Left ventricle myocardium inferior (tissue), 1 donor: ENCODE measurements at regions of chr4 and their contacts with region 1.

Region 1: DNA sequence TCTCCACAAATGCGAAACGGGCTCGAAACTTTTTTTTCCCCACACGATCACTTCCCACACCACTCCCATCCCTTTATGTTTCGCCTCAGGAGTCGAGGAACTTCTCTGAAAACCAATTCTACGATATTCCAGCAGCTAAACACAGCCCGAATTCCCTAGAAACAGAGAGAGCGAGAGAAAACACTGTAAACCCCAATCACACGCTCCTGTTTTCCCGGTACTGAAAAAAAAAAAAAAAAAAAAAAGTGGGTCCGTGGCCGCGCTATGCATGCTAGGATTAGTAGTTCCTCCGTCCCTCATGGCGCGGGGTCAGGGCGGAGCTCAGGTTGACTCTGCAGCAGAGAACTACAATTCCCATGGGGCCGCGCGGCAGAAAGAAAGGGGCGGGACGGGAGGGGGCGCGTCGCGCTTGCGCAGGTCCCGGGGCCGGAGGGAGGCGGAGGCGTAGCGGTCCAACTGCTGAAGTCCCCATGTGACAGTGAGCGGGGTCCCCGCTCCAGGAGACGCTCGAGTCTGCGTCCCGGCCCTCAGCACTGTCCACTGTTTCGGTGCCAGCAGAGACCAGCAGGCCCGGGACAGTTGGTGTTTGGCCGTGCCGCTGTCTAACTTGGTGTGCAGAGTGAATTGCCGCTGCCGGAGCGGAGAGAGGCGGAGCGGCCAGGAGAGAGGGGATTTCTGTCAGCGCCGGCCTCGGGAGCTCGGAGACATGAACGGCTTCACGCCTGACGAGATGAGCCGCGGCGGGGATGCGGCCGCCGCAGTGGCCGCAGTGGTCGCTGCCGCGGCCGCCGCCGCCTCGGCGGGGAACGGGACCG is at the start of gene SAP30:
- DNase-seq: peak; percentile 99
- H3K4me3 ChIP-seq: peak within 1 kb of the TSS; percentile 90
- H3K27ac ChIP-seq: peak within 1 kb of the TSS; percentile 98
- H3K4me1 ChIP-seq: peaks cover 82% of the 10 kb centered on the region
- H3K27me3 ChIP-seq: no peaks in the 10 kb centered on the region
- CTCF ChIP-seq: no peak
- total RNA-seq, gene SAP30: 16.5 TPM

Region 2: DNA sequence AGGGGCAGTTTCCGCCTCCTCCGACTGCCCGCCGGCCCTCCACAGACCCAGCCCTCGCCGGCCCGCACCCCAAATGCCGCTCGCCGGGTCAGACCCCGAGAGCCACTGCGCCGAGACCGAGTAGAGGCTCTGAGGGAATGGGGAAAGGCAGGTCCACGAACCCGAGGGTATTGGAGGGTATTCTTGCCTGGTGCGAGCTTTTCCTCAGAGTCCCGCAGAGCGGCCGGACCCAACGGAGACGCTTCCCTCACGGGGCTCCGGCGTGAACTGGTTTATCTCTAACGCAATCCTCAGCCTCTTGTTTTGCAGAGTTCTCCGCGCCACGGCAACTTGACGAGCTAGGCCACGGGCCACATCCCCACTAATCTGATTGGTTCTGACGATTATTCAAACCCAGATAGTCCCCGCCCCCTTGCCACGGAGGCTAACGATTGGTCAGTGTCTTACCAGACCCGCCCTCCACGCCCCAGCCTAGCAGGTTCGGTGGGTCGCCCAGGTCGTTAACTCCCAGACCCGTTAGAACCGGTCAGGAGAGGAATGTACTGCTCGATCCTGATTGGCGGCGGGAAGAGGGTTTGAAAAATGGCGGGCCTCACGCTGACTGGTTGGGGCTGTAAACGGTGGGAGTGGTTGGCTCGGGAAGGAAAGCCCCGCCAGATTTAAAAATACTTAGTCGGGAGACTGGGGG is 36.5 kb before region 1 on chr4 and contains the start of gene HMGB2:
- intact Hi-C with region 1: loop called (anchors 5 kb)
- DNase-seq: peak; percentile 100
- H3K4me3 ChIP-seq: peak within 1 kb of the TSS; percentile 94
- H3K27ac ChIP-seq: peak within 1 kb of the TSS; percentile 99
- H3K4me1 ChIP-seq: peaks cover 48% of the 10 kb centered on the region
- H3K27me3 ChIP-seq: no peaks in the 10 kb centered on the region
- CTCF ChIP-seq: no peak
- total RNA-seq, gene HMGB2: 39.4 TPM

Region 3: GRCh38 chr4:173478201-173478912 is 107.7 kb after region 1 on chr4:
- intact Hi-C with region 1: no loop called
- DNase-seq: no peak
- H3K4me3 ChIP-seq: no peak overlapping the region
- H3K27ac ChIP-seq: peak overlapping the region; percentile 27
- H3K4me1 ChIP-seq: no peaks in the 10 kb centered on the region
- H3K27me3 ChIP-seq: no peaks in the 10 kb centered on the region
- CTCF ChIP-seq: no peak